Activated T-helper 2 cell treated with anti-CD3 and anti-CD28 coated beads, Interferon-gamma antibody, Interleukin-2, Interleukin-4, amounts not matched to agents 10 μg/mL and 5 μg/mL and 100 μg/mL, durations not matched to agents 14 hours and 24 hours and 36 hours (primary cell): ENCODE measurements at regions of chr1 and their contacts with region 1.

Region 1: GRCh38 chr1:117077267-117077666 is 17.1 kb downstream of the TTF2 start:
- DNase-seq: no peak
- H3K4me3 Mint-ChIP-seq: no peak overlapping the region
- H3K27ac Mint-ChIP-seq: peak overlapping the region; percentile 70
- H3K4me1 Mint-ChIP-seq: peaks cover 19% of the 10 kb centered on the region
- H3K27me3 Mint-ChIP-seq: no peaks in the 10 kb centered on the region

Region 2: GRCh38 chr1:116128664-116129063 is 948.6 kb before region 1 on chr1:
- intact Hi-C with region 1: loop called (anchors 5 kb)
- DNase-seq: no peak
- H3K4me3 Mint-ChIP-seq: no peak overlapping the region
- H3K27ac Mint-ChIP-seq: peak overlapping the region; percentile 38
- H3K4me1 Mint-ChIP-seq: peaks cover 38% of the 10 kb centered on the region
- H3K27me3 Mint-ChIP-seq: peaks cover 17% of the 10 kb centered on the region